ENCODE measurements at regions of chr3 and their contacts with region 1.

Region 1: DNA sequence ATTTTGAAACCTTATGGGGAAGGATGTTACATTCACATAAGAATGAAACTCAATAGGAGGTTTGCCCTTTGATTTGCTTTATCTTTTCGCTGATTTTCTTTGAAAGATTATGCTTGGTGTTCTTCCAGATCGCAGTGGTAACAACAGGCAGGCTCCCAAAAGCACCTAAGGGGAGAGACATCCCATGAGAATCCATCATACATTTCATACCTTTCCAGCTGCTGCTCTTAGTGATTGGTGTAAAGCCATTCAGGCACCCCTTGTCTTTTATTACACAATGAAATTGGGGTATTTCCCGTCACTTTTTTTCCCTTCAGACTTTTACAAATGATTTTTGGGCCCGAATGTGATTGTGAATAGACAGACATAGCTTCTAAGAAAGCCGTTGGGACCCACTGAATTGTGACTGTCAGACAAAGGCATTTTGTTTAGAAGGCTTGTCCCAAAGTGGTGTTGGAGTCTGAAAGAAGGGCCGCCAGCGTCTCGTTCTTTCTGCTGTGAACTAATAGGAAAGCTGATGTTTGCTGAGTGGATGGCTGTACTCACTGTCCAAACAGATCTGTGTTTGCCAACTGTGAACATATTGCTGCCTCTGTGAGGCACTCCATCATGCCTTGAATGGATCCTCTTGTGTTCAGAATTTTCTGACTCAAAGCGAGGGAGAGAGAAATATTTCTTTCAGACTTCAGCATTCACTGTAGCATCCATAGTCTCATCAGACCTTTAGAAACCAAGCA is 164.3 kb downstream of the FNDC3B start:
- DNase-seq: peak; percentile 65 to 73
- H3K4me3 ChIP-seq: peak overlapping the region; percentile 1
- H3K4me3 Mint-ChIP-seq: peak overlapping the region; percentile 61
- H3K27ac Mint-ChIP-seq: peak overlapping the region; percentile 81
- H3K4me1 ChIP-seq: peaks cover 25% of the 10 kb centered on the region
- H3K4me1 Mint-ChIP-seq: peaks cover 21% of the 10 kb centered on the region
- H3K27me3 ChIP-seq: no peaks in the 10 kb centered on the region
- H3K27me3 Mint-ChIP-seq: no peaks in the 10 kb centered on the region
- CTCF ChIP-seq: no peak

Region 2: DNA sequence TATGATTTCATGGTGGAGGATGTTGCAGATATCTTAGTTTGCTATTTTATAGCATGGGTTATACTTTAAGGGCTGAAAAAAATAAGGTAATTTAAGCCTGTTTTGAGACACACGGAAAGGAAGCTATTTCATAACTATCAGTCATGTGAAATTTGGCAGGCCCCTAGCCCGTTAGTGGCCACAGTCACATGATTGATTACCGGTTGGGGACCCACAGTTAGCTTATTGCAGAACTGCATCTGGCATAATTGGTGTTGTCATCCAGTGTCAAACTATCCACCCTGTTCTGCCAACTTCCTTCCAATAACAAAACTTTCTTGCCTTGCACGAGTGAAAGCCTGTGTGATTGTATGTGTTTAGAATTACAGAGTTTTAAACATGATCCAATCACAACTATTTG is 129.1 kb before region 1 on chr3:
- CTCF ChIA-PET with region 1: no interaction called
- POLR2A ChIA-PET with region 1: no interaction called
- intact Hi-C with region 1: no loop called
- DNase-seq: no peak
- H3K4me3 ChIP-seq: no peak overlapping the region
- H3K4me3 Mint-ChIP-seq: no peak overlapping the region
- H3K27ac Mint-ChIP-seq: no peak overlapping the region
- H3K4me1 ChIP-seq: peaks cover 36% of the 10 kb centered on the region
- H3K4me1 Mint-ChIP-seq: peaks cover 14% of the 10 kb centered on the region
- H3K27me3 ChIP-seq: no peaks in the 10 kb centered on the region
- H3K27me3 Mint-ChIP-seq: no peaks in the 10 kb centered on the region
- CTCF ChIP-seq: no peak

Region 3: DNA sequence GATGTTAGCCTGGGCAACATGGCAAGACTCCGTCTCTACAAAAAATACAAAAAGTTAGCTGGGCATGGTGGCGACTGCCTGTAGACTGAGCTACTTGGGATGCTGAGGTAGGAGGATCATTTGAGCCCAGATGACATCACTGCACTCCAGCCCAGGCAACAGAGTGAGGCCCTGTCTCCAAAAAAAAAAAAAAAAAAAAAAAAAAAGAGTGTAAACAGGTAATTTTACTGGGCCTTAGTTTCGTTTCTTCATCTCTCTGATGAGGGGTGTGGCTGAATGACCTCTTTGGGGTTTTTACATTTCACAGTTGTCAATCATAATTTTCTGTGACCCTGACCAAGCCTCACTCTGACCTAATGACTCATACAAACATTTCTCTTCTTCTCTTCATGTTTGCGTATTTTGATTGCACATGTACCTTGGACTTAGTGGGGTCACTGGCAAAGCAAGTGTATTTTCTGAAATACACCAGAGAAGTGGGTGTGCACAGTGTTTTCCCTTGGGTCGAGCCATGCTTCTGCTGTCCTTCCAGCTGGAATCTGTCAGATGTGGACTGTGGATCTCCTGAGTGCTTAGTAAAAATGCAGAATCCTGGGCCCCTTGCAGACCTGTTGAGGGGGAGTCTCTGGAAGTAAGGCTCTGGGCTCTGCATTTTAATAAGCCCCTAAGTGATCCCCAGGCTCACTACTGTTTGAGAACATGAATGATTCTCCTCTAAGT is 23.9 kb before region 1 on chr3:
- CTCF ChIA-PET with region 1: no interaction called
- POLR2A ChIA-PET with region 1: no interaction called
- intact Hi-C with region 1: loop called (anchors 1 kb)
- DNase-seq: peak; percentile 58 to 63
- H3K4me3 ChIP-seq: no peak overlapping the region
- H3K4me3 Mint-ChIP-seq: peak overlapping the region; percentile 50
- H3K27ac Mint-ChIP-seq: no peak overlapping the region
- H3K4me1 ChIP-seq: peaks cover 17% of the 10 kb centered on the region
- H3K4me1 Mint-ChIP-seq: peaks cover 16% of the 10 kb centered on the region
- H3K27me3 ChIP-seq: no peaks in the 10 kb centered on the region
- H3K27me3 Mint-ChIP-seq: no peaks in the 10 kb centered on the region
- CTCF ChIP-seq: no peak

Region 4: GRCh38 chr3:172224560-172225214 is 21.0 kb after region 1 on chr3:
- CTCF ChIA-PET with region 1: no interaction called
- POLR2A ChIA-PET with region 1: no interaction called
- intact Hi-C with region 1: no loop called
- DNase-seq: no peak
- H3K4me3 ChIP-seq: no peak overlapping the region
- H3K4me3 Mint-ChIP-seq: no peak overlapping the region
- H3K27ac Mint-ChIP-seq: no peak overlapping the region
- H3K4me1 ChIP-seq: peaks cover 6% of the 10 kb centered on the region; the same call in 1 of the 2 replicates
- H3K4me1 Mint-ChIP-seq: peaks cover 7% of the 10 kb centered on the region
- H3K27me3 ChIP-seq: no peaks in the 10 kb centered on the region
- H3K27me3 Mint-ChIP-seq: no peaks in the 10 kb centered on the region
- CTCF ChIP-seq: no peak

Region 5: DNA sequence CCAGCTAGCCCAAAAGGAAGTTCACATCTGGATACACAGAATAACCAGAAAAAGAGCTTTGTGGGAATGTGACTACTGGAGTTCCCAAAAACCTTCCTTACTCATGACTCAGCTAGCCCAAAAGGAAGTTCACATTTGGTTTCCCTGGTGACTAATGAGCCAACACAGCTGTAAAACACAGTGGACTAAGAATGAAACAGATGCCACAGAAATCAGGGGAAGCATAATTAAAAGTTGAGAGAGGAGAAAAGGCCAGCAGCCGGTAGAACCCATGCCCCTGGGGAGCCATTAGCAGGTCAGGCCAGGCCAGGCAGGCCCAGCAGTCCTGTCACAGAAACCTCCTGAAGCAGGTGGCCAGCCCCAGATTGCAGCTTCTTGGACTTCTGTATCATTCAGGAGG is 114.3 kb after region 1 on chr3:
- CTCF ChIA-PET with region 1: no interaction called
- POLR2A ChIA-PET with region 1: no interaction called
- intact Hi-C with region 1: no loop called
- DNase-seq: no peak
- H3K4me3 ChIP-seq: no peak overlapping the region
- H3K4me3 Mint-ChIP-seq: no peak overlapping the region
- H3K27ac Mint-ChIP-seq: peak overlapping the region; percentile 38
- H3K4me1 ChIP-seq: peaks cover 16% of the 10 kb centered on the region
- H3K4me1 Mint-ChIP-seq: peaks cover 8% of the 10 kb centered on the region
- H3K27me3 ChIP-seq: no peaks in the 10 kb centered on the region
- H3K27me3 Mint-ChIP-seq: no peaks in the 10 kb centered on the region
- CTCF ChIP-seq: no peak